Left ventricle myocardium inferior (tissue), 1 donor: ENCODE measurements at regions of chr7 and their contacts with region 1.

Region 1: GRCh38 chr7:16982640-16983350 is 101.0 kb upstream of the AGR3 start:
- DNase-seq: no peak
- H3K4me3 ChIP-seq: no peak overlapping the region
- H3K27ac ChIP-seq: peak overlapping the region; percentile 16
- H3K4me1 ChIP-seq: peaks cover 16% of the 10 kb centered on the region
- H3K27me3 ChIP-seq: no peaks in the 10 kb centered on the region
- CTCF ChIP-seq: peak; percentile 96

Region 2: GRCh38 chr7:17289074-17289645 is 306.4 kb after region 1 on chr7:
- intact Hi-C with region 1: no loop called
- DNase-seq: no peak
- H3K4me3 ChIP-seq: no peak overlapping the region
- H3K27ac ChIP-seq: peak overlapping the region; percentile 67
- H3K4me1 ChIP-seq: peaks cover 31% of the 10 kb centered on the region
- H3K27me3 ChIP-seq: no peaks in the 10 kb centered on the region
- CTCF ChIP-seq: no peak

Region 3: GRCh38 chr7:17301471-17302456 is 319.0 kb after region 1 on chr7:
- intact Hi-C with region 1: loop called (anchors 10 kb)
- DNase-seq: no peak
- H3K4me3 ChIP-seq: peak overlapping the region; percentile 93
- H3K27ac ChIP-seq: peak overlapping the region; percentile 97
- H3K4me1 ChIP-seq: peaks cover 83% of the 10 kb centered on the region
- H3K27me3 ChIP-seq: no peaks in the 10 kb centered on the region
- CTCF ChIP-seq: peak; percentile 77

Region 4: GRCh38 chr7:17523813-17524741 is 541.3 kb after region 1 on chr7:
- intact Hi-C with region 1: loop called (anchors 10 kb)
- DNase-seq: no peak
- H3K4me3 ChIP-seq: no peak overlapping the region
- H3K27ac ChIP-seq: peak overlapping the region; percentile 32
- H3K4me1 ChIP-seq: peaks cover 33% of the 10 kb centered on the region
- H3K27me3 ChIP-seq: no peaks in the 10 kb centered on the region
- CTCF ChIP-seq: no peak

Region 5: DNA sequence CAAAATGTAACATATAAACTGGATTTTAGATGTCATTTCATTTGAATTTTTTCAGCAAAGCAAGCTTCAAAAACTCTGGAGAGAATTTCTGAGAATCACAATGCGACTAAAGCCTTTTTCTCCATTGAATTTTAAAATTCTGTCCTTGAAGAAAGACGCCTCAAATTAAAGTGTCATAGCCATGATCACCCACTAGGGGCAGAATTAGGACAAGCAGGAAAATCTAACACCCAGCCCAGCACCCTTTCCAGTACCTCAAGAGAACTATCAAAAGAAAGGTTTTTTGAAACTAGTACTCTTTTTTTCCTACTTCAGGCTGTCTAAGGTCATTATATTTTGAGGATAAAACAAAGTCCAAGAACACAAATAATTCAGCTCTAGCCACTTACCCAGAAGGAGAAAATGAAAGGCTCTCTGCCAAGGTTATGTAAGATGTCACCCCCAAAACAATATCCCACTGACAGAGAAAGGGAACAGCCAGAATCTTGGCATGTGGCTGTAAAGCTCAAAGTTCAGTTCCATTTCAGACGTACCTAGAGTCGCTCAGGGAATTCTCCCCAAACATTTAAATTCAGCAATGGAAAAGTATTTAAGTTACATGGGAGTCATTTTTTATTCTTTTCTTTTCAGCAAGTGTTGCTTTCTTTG is 658.1 kb after region 1 on chr7:
- intact Hi-C with region 1: loop called (anchors 10 kb)
- DNase-seq: no peak
- H3K4me3 ChIP-seq: no peak overlapping the region
- H3K27ac ChIP-seq: no peak overlapping the region
- H3K4me1 ChIP-seq: no peaks in the 10 kb centered on the region
- H3K27me3 ChIP-seq: no peaks in the 10 kb centered on the region
- CTCF ChIP-seq: peak; percentile 76